ENCODE measurements at regions of chr19 and their contacts with region 1.

Region 1: GRCh38 chr19:46392243-46392801 is 21.0 kb downstream of the CCDC8 start:
- DNase-seq: no peak
- ATAC-seq: no peak
- H3K4me3 ChIP-seq: no peak overlapping the region
- H3K27ac ChIP-seq: no peak overlapping the region
- H3K4me1 ChIP-seq: peaks cover 0 to 13% (median 0%) of the 10 kb centered on the region in 9 donors
- H3K27me3 ChIP-seq: peaks cover 0 to under 1% (median 0%) of the 10 kb centered on the region in 7 donors
- CTCF ChIP-seq: no peak

Region 2: DNA sequence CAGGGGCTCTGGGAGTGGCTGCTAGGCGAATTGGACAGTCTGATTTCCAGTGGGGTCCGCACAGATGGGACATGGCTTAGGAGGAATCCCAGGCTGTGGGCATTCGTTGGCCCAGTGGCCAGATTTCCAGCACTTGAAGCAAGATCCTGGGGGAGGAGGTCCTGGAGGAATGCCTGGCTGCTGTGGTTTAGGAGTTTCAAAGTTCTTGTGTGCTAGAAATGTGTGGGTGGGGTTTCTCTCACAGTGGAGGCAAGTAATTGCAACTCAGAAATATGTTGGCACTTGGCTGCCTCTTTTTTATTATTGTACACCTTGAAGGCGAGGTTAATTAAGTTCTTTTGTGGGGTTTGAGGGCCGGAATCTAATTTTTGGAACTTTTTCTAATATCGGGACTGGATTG is 285.0 kb before region 1 on chr19:
- intact Hi-C with region 1: no loop called
- DNase-seq: no peak
- ATAC-seq: no peak
- H3K4me3 ChIP-seq: no peak overlapping the region
- H3K27ac ChIP-seq: no peak overlapping the region
- H3K4me1 ChIP-seq: no peaks in the 10 kb centered on the region
- H3K27me3 ChIP-seq: peaks cover 0 to 30% (median 13%) of the 10 kb centered on the region in 7 donors
- CTCF ChIP-seq: no peak

Region 3: GRCh38 chr19:46271481-46272197 is 120.7 kb before region 1 on chr19:
- intact Hi-C with region 1: loop called in 1 of 10 experiments (anchors 10 kb)
- DNase-seq: no peak
- ATAC-seq: no peak
- H3K4me3 ChIP-seq: no peak overlapping the region
- H3K27ac ChIP-seq: no peak overlapping the region
- H3K4me1 ChIP-seq: no peaks in the 10 kb centered on the region
- H3K27me3 ChIP-seq: peaks cover 0 to 54% (median 29%) of the 10 kb centered on the region in 7 donors
- CTCF ChIP-seq: no peak

Region 4: DNA sequence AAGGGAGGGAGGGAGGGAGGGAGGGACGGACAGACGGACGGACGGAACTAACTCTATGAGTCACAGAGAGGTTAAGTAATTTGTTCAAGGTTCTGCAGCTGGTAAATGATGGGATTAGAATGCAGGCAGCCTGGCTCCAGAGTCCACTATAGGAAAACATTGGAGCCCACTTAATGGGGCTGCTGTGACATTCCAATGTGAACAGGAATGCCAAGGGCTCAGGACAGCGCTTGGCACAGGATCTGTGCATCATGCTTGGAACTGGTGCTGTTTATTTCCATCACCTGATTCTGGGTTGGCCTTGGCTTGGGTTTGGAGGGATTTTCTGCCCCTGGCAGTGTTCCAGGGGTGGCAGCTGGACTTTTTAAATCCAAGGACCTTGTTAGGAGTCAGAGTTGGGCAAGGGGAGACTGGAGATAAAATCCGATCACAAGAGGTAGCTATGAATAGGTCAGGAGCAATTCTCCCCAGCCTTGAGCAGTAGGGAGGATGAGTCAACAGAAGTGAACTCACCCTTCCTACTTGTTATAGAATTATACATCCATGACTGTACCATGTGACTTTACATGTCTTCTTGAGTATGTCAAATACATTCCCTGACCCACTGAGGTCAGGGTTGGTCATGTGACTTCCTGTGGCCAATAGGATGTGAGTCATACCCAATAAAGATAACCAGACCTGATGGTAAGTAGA is 103.3 kb before region 1 on chr19:
- intact Hi-C with region 1: loop called in 7 of 10 experiments (anchors 5 to 10 kb)
- DNase-seq: peak; percentile 33 to 57
- ATAC-seq: peak; percentile 66 to 94 (median 85)
- H3K4me3 ChIP-seq: no peak overlapping the region
- H3K27ac ChIP-seq: peak overlapping the region; percentile 59 to 95 (median 69)
- H3K4me1 ChIP-seq: peaks cover 0 to 22% (median 11%) of the 10 kb centered on the region in 9 donors
- H3K27me3 ChIP-seq: no peaks in the 10 kb centered on the region
- CTCF ChIP-seq: no peak

Region 5: DNA sequence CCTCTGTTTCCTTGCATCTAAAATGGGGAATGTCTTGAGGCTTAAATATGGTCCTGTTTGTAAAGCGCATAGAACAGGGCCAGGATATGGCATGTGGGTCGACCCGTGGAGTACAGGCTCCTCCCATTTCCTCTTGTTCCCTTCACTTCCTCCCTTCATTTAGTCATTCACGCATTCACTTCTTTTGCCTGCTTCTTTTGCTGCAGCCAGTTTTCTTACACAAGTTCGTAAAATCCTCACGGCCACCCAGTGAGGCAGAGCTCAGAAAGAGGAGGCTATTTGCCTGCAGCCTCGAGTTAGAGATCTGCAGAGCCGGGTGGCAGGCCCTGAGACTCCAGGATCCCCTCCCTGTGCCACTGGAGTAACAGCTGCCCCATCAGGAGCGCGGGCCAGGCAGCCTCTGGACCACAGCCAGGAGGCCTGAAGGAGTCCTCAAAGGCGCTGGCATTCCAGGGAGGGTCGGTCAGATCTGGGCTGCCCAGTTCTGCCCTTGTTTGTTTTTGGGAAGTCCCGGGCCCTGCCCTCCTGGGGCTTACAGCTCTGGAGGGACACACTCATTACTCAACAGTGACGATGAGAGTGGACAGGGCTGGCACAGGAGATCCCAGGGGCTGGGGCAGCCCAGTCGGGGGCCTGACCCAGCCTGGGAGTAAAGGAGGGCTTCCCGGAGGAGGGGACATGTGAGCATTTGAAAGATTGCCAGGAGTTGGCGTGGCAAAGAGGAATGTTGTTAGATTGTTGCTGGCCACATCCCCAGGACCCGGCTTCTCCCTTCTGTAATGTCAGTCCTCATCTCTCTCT is 40.9 kb before region 1 on chr19:
- intact Hi-C with region 1: no loop called
- DNase-seq: peak in 1 of 2 donors; percentile 48
- ATAC-seq: no peak
- H3K4me3 ChIP-seq: peak overlapping the region in 4 of 10 donors; percentile 6 to 29 (median 19)
- H3K27ac ChIP-seq: peak overlapping the region; percentile 57 to 89 (median 78)
- H3K4me1 ChIP-seq: peaks cover 36 to 88% (median 66%) of the 10 kb centered on the region in 9 donors
- H3K27me3 ChIP-seq: no peaks in the 10 kb centered on the region
- CTCF ChIP-seq: no peak

Region 6: GRCh38 chr19:46487802-46488445 is 95.6 kb after region 1 on chr19:
- intact Hi-C with region 1: loop called in 4 of 10 experiments (anchors 1 to 2 kb)
- DNase-seq: peak; percentile 71 to 82
- ATAC-seq: peak; percentile 72 to 86 (median 77)
- H3K4me3 ChIP-seq: peak overlapping the region in 9 of 10 donors; percentile 21 to 50 (median 46)
- H3K27ac ChIP-seq: no peak overlapping the region
- H3K4me1 ChIP-seq: peaks cover 9 to 38% (median 32%) of the 10 kb centered on the region in 9 donors
- H3K27me3 ChIP-seq: peaks cover 3 to 66% (median 58%) of the 10 kb centered on the region in 7 donors
- CTCF ChIP-seq: peak; percentile 80 to 95 (median 90)